Right ventricle myocardium superior (tissue), 1 donor: ENCODE measurements at regions of chr1 and their contacts with region 1.

Region 1: GRCh38 chr1:26169669-26170471 is at the start of gene ZNF593:
- DNase-seq: peak; percentile 95
- ATAC-seq: peak; percentile 97
- total RNA-seq, gene ZNF593: 14.1 TPM

Region 2: DNA sequence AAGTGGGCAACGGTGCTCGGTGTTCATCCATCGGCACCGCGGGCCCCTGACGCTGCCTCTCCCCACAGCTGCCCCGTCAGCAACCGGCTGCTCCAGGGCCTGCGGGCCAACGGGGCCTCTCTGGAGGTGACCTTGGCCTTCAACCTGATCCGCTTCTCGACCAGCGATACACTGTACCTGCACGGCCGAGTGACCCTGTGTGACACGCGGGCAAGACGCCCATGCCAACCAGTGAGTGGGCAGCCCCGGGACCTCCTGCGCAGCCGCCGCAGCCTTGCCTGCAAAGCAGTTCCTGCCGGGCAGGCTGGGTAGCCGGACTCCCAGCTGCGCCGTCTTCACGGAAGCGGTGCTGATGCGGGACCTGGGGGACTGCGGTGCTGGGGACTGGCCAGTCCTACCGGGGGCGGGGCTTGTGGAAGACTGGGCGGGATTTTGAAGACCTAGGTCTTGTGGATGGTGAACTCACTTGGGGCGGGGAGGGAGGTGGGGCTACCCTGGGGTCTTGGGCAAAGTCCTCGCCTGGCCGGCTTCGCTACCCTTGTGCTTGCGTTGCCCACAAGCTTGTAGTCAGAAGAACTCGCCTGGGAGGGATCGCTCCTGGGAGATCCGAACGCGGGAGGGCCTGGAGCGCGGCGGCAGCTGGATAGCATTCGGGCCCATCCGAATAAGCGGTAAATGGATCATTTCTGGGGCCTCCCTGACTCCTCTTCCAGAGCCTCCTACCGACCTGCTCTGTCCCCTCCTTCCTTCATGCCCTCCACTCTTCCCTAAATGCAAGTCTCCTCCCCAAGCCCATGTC is 55.4 kb after region 1 on chr1:
- intact Hi-C with region 1: loop called (anchors 5 kb)
- DNase-seq: peak; percentile 82
- ATAC-seq: peak; percentile 92

Region 3: GRCh38 chr1:26237230-26237966 is 67.5 kb after region 1 on chr1:
- intact Hi-C with region 1: no loop called
- DNase-seq: no peak
- ATAC-seq: no peak